GM10248 (cell line): ENCODE measurements at regions of chr1 and their contacts with region 1.

Region 1: DNA sequence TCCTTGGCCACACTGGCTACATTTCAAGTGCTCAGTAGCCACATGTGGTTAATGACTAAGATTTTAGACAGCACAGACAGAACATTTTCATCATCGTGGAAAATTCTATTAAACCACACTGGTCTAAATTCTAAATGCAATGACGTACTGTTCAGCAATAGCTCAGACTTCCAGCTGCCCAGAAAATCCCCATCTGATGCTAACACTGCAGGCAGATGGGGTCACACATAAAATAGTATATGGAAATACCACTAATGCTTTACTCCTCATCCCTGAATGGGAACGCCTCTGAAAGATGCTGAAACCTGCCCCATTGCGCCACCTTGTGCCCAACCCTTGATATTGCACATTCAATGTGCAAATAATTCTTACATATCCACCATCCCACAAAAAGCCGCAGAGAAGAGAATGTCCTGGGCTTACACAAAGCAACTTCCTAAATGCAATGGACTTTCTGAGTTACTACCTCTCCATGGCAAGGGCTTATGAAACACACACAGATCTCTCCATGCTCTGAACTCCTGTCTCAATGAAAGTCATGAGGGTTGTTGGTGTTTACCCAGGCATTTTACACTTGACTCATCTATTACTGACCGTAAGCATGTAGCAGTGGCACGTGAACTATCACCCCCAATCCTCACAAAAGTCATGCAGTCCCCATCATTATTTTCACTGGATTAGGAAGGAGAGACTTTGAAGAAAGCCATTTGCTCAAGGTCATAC is 20.3 kb upstream of the SLC5A9 start:
- DNase-seq: peak; percentile 42
- CTCF ChIP-seq: peak; percentile 78

Region 2: GRCh38 chr1:48093696-48094528 is 108.3 kb before region 1 on chr1:
- CTCF ChIA-PET with region 1: interaction called, 22 read pairs
- POLR2A ChIA-PET with region 1: no interaction called
- DNase-seq: peak; percentile 78
- CTCF ChIP-seq: peak; percentile 82

Region 3: GRCh38 chr1:48109390-48110013 is 92.7 kb before region 1 on chr1:
- CTCF ChIA-PET with region 1: interaction called, 77 read pairs
- POLR2A ChIA-PET with region 1: no interaction called
- DNase-seq: no peak
- CTCF ChIP-seq: peak; percentile 74